ENCODE measurements at regions of chr17 and their contacts with region 1.

Region 1: DNA sequence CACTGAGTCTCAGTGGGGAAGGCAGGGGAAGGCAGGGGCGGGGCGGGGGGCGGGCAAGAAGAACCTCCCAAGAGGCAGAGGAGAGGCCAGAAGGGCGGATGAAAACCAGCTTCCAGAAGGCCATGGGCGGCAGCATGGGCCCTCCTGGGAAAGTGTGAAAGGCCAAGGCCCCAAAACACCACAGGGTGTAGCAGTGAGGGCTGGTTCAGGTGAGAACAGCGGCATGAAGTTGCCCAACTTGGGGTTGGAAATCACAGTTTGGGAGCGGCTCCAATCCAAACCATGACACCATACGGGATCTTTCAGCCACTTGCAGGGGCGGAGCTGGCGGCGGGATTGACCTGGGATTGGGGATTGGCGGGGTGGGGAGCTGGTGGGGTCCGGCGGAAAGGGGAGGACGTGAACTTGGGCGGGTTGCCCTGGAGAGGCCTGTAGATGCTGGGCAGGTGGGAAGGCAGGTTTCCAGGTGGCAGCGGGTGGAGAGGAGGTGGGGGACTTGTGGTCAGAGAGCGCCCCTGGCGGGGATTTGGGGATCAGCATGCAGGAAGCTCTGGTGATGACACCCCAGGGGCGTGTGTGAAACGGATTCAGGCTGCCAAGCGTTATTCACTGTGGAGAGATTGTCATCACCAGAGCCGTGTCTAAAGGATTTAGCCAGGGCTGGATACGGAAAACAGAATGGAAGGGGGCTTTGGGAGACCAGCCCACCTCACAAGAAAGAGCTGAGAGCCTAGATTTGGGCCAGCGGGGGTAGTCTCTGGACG is 80.9 kb downstream of the ARHGAP23 start:
- DNase-seq: peak; percentile 93 to 96
- H3K4me3 ChIP-seq: peak overlapping the region in 3 of 4 experiments; percentile 30 to 56 (median 47); a peak in 7 of 8 replicates
- H3K27ac ChIP-seq: peak overlapping the region; percentile 37; the same call in 1 of the 2 replicates
- H3K4me1 ChIP-seq: peaks cover 4 to 28% (median 21%) of the 10 kb centered on the region in 4 experiments
- H3K27me3 ChIP-seq: peaks cover 0 to 24% (median 11%) of the 10 kb centered on the region in 4 experiments; a peak in 4 of 7 replicates
- CTCF ChIP-seq: peak; percentile 90 to 96 (median 95)
- EP300 ChIP-seq: 0 out of 3 replicates have a peak, but pooled peaks of 1 of the 2 experiments have one; percentile 19
- POLR2A ChIP-seq: peak; percentile 69 to 76; a peak in 2 of 3 replicates
- RAD21 ChIP-seq: peak; percentile 75 to 80

Region 2: DNA sequence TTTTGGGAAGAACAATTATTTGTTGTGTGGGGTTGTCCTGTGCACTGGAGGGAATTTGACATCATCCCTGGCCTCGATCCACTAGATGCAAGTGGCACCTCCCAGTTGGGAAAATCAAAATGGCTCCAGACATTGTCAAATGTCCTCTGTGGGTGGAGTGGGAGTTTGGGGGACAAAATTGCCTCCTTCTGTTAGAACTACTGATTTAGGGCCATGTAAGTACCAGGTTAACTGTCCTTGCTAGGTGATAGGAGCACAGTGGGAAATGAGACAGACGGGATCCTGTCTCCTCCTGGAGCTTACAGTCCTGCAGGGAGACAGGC is 24.1 kb before region 1 on chr17:
- CTCF ChIA-PET with region 1: interaction called, 29 read pairs
- POLR2A ChIA-PET with region 1: interaction called, 3 read pairs
- DNase-seq: no peak
- H3K4me3 ChIP-seq: no peak overlapping the region
- H3K27ac ChIP-seq: no peak overlapping the region
- H3K4me1 ChIP-seq: peaks cover 0 to 6% (median 4%) of the 10 kb centered on the region in 4 experiments; a peak in 3 of 7 replicates
- H3K27me3 ChIP-seq: no peaks in the 10 kb centered on the region
- CTCF ChIP-seq: no peak
- EP300 ChIP-seq: no peak
- POLR2A ChIP-seq: no peak
- RAD21 ChIP-seq: no peak

Region 3: GRCh38 chr17:38533866-38534497 is 24.8 kb after region 1 on chr17:
- CTCF ChIA-PET with region 1: interaction called, 56 read pairs
- POLR2A ChIA-PET with region 1: interaction called, 6 read pairs
- DNase-seq: no peak
- H3K4me3 ChIP-seq: no peak overlapping the region
- H3K27ac ChIP-seq: no peak overlapping the region
- H3K4me1 ChIP-seq: peaks cover 0 to 19% (median 5%) of the 10 kb centered on the region in 4 experiments; a peak in 5 of 7 replicates
- H3K27me3 ChIP-seq: peaks cover 0 to 7% (median 1%) of the 10 kb centered on the region in 4 experiments; a peak in 3 of 7 replicates
- CTCF ChIP-seq: no peak
- EP300 ChIP-seq: no peak
- POLR2A ChIP-seq: no peak
- RAD21 ChIP-seq: no peak

Region 4: DNA sequence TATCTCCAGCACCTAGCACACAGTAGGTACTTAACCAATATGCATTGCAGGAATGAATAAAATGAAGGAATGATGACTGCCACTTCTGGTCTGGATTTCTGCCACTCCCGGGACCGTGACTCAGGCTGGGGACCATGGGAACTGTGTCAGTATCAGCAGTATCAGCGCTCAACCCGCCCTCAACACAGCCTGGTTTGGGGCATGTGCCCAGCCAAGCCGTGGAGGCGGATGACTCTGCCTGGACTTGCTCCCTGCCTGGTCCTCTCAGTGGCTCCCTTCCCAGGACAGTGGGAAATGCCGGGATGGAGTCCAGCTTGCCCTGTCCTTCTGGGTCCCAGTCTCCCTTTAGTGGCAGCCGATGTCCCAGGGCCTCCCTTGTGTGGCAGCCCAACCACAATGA is 41.5 kb after region 1 on chr17:
- CTCF ChIA-PET with region 1: interaction called, 190 read pairs
- POLR2A ChIA-PET with region 1: interaction called, 6 read pairs
- DNase-seq: no peak
- H3K4me3 ChIP-seq: no peak overlapping the region
- H3K27ac ChIP-seq: no peak overlapping the region
- H3K4me1 ChIP-seq: peaks cover 0 to 5% (median 0%) of the 10 kb centered on the region in 4 experiments; a peak in 3 of 7 replicates
- H3K27me3 ChIP-seq: no peaks in the 10 kb centered on the region; a peak in 1 of 7 replicates
- CTCF ChIP-seq: no peak
- EP300 ChIP-seq: no peak
- POLR2A ChIP-seq: no peak
- RAD21 ChIP-seq: no peak

Region 5: GRCh38 chr17:38557836-38558727 is 48.9 kb after region 1 on chr17:
- CTCF ChIA-PET with region 1: interaction called, 190 read pairs
- POLR2A ChIA-PET with region 1: interaction called, 5 read pairs
- DNase-seq: peak; percentile 93 to 97
- H3K4me3 ChIP-seq: peak overlapping the region; percentile 37 to 69 (median 58); a peak in 7 of 8 replicates
- H3K27ac ChIP-seq: no peak overlapping the region
- H3K4me1 ChIP-seq: peaks cover 4 to 37% (median 27%) of the 10 kb centered on the region in 4 experiments
- H3K27me3 ChIP-seq: peaks cover 34 to 52% (median 48%) of the 10 kb centered on the region in 4 experiments
- CTCF ChIP-seq: peak; percentile 95 to 97 (median 96)
- EP300 ChIP-seq: 0 out of 3 replicates have a peak, but pooled peaks of 1 of the 2 experiments have one; percentile 58
- POLR2A ChIP-seq: no peak
- RAD21 ChIP-seq: peak; percentile 75 to 85

Region 6: DNA sequence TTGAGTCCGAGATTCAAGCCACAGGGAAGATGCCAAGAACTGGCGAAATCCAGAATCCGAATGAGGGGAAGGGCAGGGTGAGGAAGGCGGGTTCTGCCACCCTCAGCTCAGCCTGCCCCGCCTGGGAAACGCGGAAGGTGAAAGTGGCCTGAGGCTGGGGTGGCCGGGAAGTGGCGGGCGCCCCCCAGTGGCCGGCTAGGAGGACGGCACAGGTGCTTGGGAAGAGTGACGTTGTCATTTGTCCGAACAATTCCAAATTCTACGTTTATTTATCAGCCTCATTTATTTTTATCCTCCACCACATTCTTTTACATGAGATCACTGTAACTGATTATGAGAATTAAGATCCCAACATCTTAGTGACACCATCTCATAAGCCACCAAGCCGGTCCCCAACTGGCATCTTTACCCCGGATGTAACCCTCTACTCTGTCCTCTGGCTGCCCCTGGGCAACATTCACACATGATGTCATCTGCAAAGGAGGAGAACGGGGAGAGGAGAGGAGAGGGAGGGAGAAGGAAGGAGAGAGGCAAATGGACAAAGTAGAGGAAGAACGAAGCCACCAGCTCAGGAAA is 75.2 kb after region 1 on chr17:
- CTCF ChIA-PET with region 1: interaction called, 13 read pairs
- POLR2A ChIA-PET with region 1: interaction called, 6 read pairs
- DNase-seq: peak in 1 of 2 experiments; percentile 89
- H3K4me3 ChIP-seq: peak overlapping the region in 1 of 4 experiments; percentile 34; a peak in 2 of 8 replicates
- H3K27ac ChIP-seq: no peak overlapping the region
- H3K4me1 ChIP-seq: peaks cover 3 to 45% (median 26%) of the 10 kb centered on the region in 4 experiments
- H3K27me3 ChIP-seq: peaks cover 4 to 18% (median 13%) of the 10 kb centered on the region in 4 experiments
- CTCF ChIP-seq: peak; percentile 88 to 94 (median 92)
- EP300 ChIP-seq: no peak
- POLR2A ChIP-seq: no peak
- RAD21 ChIP-seq: peak; percentile 68 to 78

Region 7: DNA sequence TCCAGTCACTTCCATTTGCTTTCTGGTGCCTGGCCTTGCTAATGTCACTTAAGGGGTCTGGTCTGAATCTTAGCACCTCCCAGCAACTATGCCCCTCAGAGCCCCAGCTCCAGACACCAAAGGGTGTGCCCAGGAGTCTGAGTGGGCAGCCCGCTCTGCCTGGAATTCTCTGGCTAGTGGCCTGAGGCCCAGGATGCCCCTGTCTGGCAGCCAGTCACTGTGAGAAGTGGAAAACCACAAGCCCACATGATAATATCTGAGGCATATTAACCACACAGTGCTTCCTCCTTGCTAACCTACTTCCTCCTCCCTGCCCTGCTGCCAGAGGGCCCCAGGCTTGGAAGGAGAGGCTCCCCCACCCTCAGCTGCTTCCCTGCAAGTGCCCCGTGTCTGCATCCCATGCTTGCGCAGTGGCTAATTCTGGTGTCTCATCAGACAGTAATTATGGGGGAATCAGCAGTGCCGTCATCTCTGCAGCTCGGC is 82.6 kb after region 1 on chr17:
- CTCF ChIA-PET with region 1: interaction called, 11 read pairs
- POLR2A ChIA-PET with region 1: interaction called, 6 read pairs
- DNase-seq: no peak
- H3K4me3 ChIP-seq: no peak overlapping the region
- H3K27ac ChIP-seq: no peak overlapping the region
- H3K4me1 ChIP-seq: peaks cover 0 to 35% (median 22%) of the 10 kb centered on the region in 4 experiments; a peak in 6 of 7 replicates
- H3K27me3 ChIP-seq: peaks cover 0 to 7% (median 0%) of the 10 kb centered on the region in 4 experiments; a peak in 3 of 7 replicates
- CTCF ChIP-seq: no peak
- EP300 ChIP-seq: no peak
- POLR2A ChIP-seq: no peak
- RAD21 ChIP-seq: no peak